PC-3 (cell line): ENCODE measurements at regions of chr2 and their contacts with region 1.

Region 1: GRCh38 chr2:65608466-65608865 is 176.1 kb upstream of the SPRED2 start:
- DNase-seq: no peak
- ATAC-seq: no peak
- H3K4me3 ChIP-seq: no peak overlapping the region
- H3K27ac ChIP-seq: no peak overlapping the region
- H3K4me1 ChIP-seq: peaks cover 27% of the 10 kb centered on the region
- H3K27me3 ChIP-seq: no peaks in the 10 kb centered on the region
- CTCF ChIP-seq: no peak

Region 2: DNA sequence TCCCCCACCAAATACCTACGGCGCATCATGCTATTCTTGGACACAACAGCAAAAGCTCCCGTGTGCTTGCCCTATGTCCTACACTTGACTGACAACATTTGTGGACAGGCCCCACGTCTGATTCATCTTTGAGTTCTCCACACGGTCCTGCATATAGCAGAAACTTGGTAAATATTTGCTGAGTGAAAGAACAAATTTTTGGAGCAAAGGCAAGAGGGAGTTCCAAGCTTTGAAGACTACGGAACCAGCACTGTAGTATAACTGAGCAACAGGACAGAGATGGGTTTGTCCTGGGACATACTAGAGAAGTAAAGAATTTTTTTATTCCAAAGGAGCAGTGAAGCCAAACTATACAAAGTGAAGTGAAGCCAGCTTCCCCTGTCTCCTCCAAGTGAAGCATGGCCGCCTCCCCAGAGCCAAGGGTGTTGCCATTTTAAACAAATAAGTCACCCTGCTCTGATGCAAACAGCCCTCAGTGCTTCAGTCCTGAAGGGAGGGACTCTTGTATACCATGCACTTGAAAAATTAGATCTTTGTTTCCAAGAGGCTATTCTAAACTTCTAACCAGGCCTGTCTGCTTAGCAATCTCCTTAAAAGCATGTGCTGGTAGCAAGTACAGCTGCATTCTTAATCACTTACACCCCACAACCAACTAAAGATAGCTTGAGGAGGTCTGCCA is 212.0 kb before region 1 on chr2:
- CTCF ChIA-PET with region 1: no interaction called
- POLR2A ChIA-PET with region 1: no interaction called
- intact Hi-C with region 1: no loop called
- DNase-seq: peak; percentile 84
- ATAC-seq: peak; percentile 84
- H3K4me3 ChIP-seq: peak overlapping the region; percentile 58
- H3K27ac ChIP-seq: peak overlapping the region; percentile 94
- H3K4me1 ChIP-seq: peaks cover 39% of the 10 kb centered on the region
- H3K27me3 ChIP-seq: no peaks in the 10 kb centered on the region
- CTCF ChIP-seq: no peak

Region 3: GRCh38 chr2:65491381-65491909 is 117.0 kb before region 1 on chr2:
- CTCF ChIA-PET with region 1: no interaction called
- POLR2A ChIA-PET with region 1: no interaction called
- intact Hi-C with region 1: no loop called
- DNase-seq: peak; percentile 70
- ATAC-seq: peak; percentile 39; the same call in 1 of the 2 replicates
- H3K4me3 ChIP-seq: no peak overlapping the region
- H3K27ac ChIP-seq: no peak overlapping the region
- H3K4me1 ChIP-seq: peaks cover 3% of the 10 kb centered on the region; the same call in 1 of the 2 replicates
- H3K27me3 ChIP-seq: no peaks in the 10 kb centered on the region
- CTCF ChIP-seq: no peak

Region 4: GRCh38 chr2:65583061-65583460 is 25.4 kb before region 1 on chr2:
- CTCF ChIA-PET with region 1: interaction called, 10 read pairs
- POLR2A ChIA-PET with region 1: no interaction called
- intact Hi-C with region 1: no loop called
- DNase-seq: no peak
- ATAC-seq: no peak
- H3K4me3 ChIP-seq: no peak overlapping the region
- H3K27ac ChIP-seq: no peak overlapping the region
- H3K4me1 ChIP-seq: no peaks in the 10 kb centered on the region
- H3K27me3 ChIP-seq: no peaks in the 10 kb centered on the region
- CTCF ChIP-seq: no peak

Region 5: DNA sequence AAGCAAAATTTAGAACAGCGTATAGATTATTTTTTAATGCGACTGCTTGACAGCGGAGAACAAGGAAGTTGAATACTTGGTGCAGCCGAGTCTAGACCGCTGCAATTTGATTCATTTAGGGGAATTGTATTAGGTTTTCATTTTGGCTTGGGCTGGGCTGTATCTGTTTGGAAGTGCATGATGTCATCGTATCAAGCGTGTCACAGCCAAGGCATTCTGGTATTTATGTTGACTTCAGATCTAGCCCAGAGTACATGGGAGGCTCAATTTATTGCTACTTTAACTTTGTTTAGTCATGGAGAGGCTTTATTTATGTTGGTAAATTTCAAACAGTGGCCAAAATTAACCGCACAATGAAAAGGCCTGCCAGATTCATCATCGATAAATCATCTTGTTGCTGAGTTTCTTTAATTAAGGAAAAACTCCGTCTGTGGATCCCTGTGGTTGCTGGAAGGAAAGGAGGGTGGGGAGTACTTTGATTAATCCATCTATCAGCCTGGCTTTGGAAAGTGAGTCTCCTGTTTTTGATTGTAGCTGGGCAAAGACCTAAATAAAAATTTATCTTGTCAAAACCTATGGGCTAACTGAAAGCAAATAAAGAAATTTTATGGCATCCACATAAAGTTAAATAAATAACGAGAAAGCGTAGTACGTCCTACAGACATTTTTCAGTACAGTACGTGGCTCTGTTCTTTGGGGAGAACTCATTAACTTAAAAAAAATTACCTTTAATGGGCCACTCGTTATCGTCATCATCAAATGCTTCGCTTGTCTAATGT is 54.4 kb after region 1 on chr2:
- CTCF ChIA-PET with region 1: no interaction called
- POLR2A ChIA-PET with region 1: no interaction called
- intact Hi-C with region 1: loop called (anchors 1 kb)
- DNase-seq: peak; percentile 93
- ATAC-seq: peak; percentile 90
- H3K4me3 ChIP-seq: peak overlapping the region; percentile 55
- H3K27ac ChIP-seq: peak overlapping the region; percentile 78
- H3K4me1 ChIP-seq: peaks cover 38% of the 10 kb centered on the region
- H3K27me3 ChIP-seq: no peaks in the 10 kb centered on the region
- CTCF ChIP-seq: no peak